ENCODE measurements at regions of chr19 and their contacts with region 1.

Region 1: GRCh38 chr19:12333162-12334159 is at the start of gene ZNF563:
- DNase-seq: peak; percentile 95
- ATAC-seq: peak; percentile 97
- H3K4me3 Mint-ChIP-seq: peak within 1 kb of the TSS; percentile 89
- H3K27ac Mint-ChIP-seq: peak within 1 kb of the TSS; percentile 99
- H3K4me1 Mint-ChIP-seq: peaks cover 23% of the 10 kb centered on the region
- H3K27me3 Mint-ChIP-seq: no peaks in the 10 kb centered on the region
- total RNA-seq, gene ZNF563: 5.2 to 6.3 TPM

Region 2: DNA sequence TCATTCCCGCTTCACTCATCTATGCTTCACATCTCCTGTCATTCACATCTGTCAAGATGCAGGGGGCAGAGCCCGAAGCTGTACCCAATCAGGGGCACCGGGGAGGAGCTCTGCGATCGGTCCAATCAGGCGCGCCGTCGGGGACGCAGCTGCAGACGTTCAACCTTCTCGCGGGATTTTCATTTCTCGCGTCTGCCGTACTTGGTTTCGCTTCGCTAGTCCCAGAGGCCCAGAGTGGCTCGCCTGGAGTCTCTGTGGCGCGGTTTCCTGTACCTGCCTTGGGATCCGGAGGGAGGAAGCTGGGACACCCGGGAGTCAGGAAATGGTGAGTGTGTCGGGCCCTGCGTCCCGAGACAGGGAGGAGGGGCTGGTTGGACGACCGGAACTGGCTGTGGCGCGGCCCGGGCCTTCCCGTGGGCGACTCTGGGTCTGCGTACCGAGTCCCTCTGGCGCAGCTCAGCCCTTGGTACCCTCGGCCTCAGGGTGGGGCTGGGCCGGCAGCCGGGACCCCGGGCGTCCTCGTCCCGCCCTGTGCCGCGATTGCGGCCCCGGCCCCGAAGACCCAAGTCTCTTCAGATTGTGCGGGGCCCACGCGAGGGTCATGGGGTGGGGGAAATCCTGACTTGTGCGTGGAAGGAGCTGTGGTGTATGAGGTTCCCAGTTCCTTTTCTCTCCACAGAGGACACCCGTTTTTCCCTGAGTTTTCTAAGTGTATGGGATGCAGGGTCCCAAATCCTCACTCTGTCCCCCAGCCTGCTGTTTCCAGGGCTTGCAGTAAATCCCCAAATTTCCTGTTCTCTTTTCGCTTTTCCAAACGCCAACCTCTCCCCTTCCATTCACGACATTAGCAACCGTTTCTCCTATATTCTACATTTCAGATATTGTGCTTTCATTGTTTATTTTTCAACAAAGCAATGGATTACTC is 170.3 kb before region 1 on chr19 and contains the start of gene ZNF136:
- POLR2A ChIA-PET with region 1: interaction called, 12 read pairs
- DNase-seq: peak; percentile 87
- ATAC-seq: peak; percentile 99
- H3K4me3 Mint-ChIP-seq: peak within 1 kb of the TSS; percentile 95
- H3K27ac Mint-ChIP-seq: peak within 1 kb of the TSS; percentile 99
- H3K4me1 Mint-ChIP-seq: peaks cover 25% of the 10 kb centered on the region
- H3K27me3 Mint-ChIP-seq: no peaks in the 10 kb centered on the region
- total RNA-seq, gene ZNF136: 16.4 to 18.2 TPM

Region 3: GRCh38 chr19:12294249-12295158 is 39.0 kb before region 1 on chr19 and contains the start of gene ZNF44:
- POLR2A ChIA-PET with region 1: interaction called, 31 read pairs
- DNase-seq: peak; percentile 89
- ATAC-seq: peak; percentile 94
- H3K4me3 Mint-ChIP-seq: peak within 1 kb of the TSS; percentile 100
- H3K27ac Mint-ChIP-seq: peak within 1 kb of the TSS; percentile 98
- H3K4me1 Mint-ChIP-seq: peaks cover 24% of the 10 kb centered on the region
- H3K27me3 Mint-ChIP-seq: no peaks in the 10 kb centered on the region
- total RNA-seq, gene ZNF44: 20.8 to 21.8 TPM

Region 4: DNA sequence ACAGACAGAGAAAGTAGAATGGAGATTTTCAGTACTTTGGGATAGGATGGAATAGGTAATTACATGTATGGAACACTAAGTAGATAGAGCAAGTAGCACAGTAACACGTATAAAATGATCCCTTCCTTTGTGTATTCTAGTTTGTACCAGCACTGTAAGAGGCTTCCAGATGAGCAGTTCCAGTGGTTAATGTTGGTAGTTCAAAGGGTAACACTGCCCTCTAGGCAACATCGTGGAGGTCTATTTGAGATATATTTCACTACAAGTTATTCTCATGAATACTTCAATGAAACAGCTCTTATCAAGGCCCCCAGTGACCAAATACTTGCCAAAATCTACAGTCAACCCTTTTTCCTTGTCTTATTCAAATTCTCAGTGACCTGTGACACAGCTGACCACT is 13.4 kb after region 1 on chr19:
- POLR2A ChIA-PET with region 1: no interaction called
- DNase-seq: no peak
- ATAC-seq: no peak
- H3K4me3 Mint-ChIP-seq: no peak overlapping the region
- H3K27ac Mint-ChIP-seq: no peak overlapping the region
- H3K4me1 Mint-ChIP-seq: no peaks in the 10 kb centered on the region
- H3K27me3 Mint-ChIP-seq: no peaks in the 10 kb centered on the region

Region 5: GRCh38 chr19:12365236-12366162 is 32.0 kb after region 1 on chr19 and contains the start of gene ZNF442:
- POLR2A ChIA-PET with region 1: interaction called, 31 read pairs
- DNase-seq: peak; percentile 80
- ATAC-seq: peak; percentile 98
- H3K4me3 Mint-ChIP-seq: peak within 1 kb of the TSS; percentile 96
- H3K27ac Mint-ChIP-seq: peak within 1 kb of the TSS; percentile 91
- H3K4me1 Mint-ChIP-seq: peaks cover 16% of the 10 kb centered on the region
- H3K27me3 Mint-ChIP-seq: peaks cover 1% of the 10 kb centered on the region
- total RNA-seq, gene ZNF442: 2.6 to 4.3 TPM

Region 6: DNA sequence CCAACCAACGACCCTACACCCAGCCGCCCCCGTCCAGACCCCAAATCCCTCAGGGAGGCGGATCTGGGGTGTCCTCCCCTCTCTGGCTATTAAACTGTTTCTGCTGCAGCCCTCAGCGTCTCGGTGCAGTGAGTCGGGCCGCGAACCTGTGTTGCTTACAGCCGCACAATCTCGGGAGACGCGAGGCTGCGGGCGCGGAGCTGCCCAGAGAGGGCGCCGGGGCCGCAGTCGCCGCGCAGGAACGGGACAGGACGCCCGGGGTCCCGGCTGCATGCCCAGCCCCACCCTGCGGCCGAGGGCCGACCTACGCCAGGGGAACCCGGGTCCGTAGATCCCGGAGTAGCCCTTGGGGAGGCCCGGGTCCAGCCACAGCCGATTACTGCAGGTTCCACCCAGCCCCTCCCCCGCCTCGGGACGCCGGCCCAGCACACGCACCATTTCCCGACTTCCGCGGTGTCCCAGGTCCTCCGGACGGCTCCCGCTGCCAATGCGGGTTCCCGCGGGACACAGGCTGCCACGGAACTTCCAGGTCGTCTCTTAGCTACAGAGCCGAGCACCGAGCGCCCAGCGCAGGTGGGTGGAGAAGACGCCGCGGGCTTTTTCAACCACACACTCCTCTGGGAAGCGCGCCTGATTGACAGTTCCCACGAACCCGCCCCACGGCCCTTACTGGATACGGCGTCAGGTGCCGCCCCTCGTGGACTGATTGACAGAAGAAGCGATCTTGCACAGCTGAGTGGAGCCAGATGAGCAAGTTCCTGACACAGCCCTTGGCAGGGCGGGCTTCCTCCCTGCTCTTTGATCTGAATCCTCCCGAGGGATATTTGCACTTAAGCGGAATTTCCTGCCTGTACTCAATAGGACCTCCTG is 67.4 kb after region 1 on chr19 and contains the start of gene ZNF799:
- POLR2A ChIA-PET with region 1: no interaction called
- DNase-seq: peak; percentile 83
- ATAC-seq: peak; percentile 98
- H3K4me3 Mint-ChIP-seq: peak within 1 kb of the TSS; percentile 93
- H3K27ac Mint-ChIP-seq: peak within 1 kb of the TSS; percentile 80
- H3K4me1 Mint-ChIP-seq: peaks cover 11% of the 10 kb centered on the region
- H3K27me3 Mint-ChIP-seq: no peaks in the 10 kb centered on the region
- total RNA-seq, gene ZNF799: 7.6 to 7.9 TPM

Region 7: GRCh38 chr19:12440541-12441316 is 107.3 kb after region 1 on chr19 and contains the start of gene ZNF443:
- POLR2A ChIA-PET with region 1: interaction called, 11 read pairs
- DNase-seq: peak; percentile 98
- ATAC-seq: peak; percentile 98
- H3K4me3 Mint-ChIP-seq: peak within 1 kb of the TSS; percentile 99
- H3K27ac Mint-ChIP-seq: peak within 1 kb of the TSS; percentile 91
- H3K4me1 Mint-ChIP-seq: peaks cover 11% of the 10 kb centered on the region
- H3K27me3 Mint-ChIP-seq: peaks cover 2% of the 10 kb centered on the region
- total RNA-seq, gene ZNF443: 6.9 to 7.1 TPM

Region 8: GRCh38 chr19:12495002-12495802 is 161.7 kb after region 1 on chr19:
- POLR2A ChIA-PET with region 1: interaction called, 12 read pairs
- DNase-seq: peak; percentile 91
- ATAC-seq: peak; percentile 99
- H3K4me3 Mint-ChIP-seq: peak overlapping the region; percentile 93
- H3K27ac Mint-ChIP-seq: peak overlapping the region; percentile 88
- H3K4me1 Mint-ChIP-seq: peaks cover 12% of the 10 kb centered on the region
- H3K27me3 Mint-ChIP-seq: no peaks in the 10 kb centered on the region

Measured in activated naive CD8-positive, alpha-beta T cell treated with anti-CD3 and anti-CD28 coated beads, Interleukin-2, amount 10 ng/mL, durations not matched to agents 7 days and 5 days (primary cell).